AG04450 (cell line): ENCODE measurements at regions of chr14 and their contacts with region 1.

Region 1: DNA sequence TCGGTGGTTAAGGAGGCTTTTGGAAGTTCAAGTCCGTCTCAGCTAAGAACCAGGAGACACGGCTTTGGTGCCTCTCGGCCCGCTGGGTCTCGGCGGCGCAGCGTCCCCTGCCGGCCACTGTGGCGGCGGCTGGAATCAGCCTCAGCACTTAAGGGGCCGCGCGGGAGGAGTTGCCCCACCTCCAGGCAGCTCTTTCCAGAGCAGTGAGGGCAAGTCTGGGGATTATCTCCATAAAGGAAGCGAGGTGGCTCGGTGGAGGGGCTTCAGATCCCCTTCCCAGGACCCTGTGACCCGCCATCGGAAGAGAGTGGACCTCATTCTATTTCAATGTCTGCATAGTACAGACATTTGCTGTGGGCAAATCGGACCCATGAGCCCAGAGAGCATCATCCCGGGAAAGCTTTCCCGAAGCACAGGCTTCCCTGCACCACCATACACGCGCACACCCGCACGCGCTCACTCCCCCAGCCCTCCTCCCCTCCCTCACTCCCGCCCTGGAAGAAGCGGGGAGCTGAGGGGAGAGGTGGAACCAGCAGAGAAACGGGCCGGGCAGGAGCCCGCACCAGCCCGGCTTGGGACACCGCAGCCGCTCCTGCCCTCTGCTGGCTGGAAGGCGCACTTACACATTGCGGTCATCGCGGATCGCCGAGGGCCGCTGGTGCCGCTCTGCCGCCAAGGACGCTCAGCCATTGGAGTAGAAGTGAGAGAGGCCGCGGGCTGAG is 15.9 kb downstream of the RNASE2 start:
- DNase-seq: peak; percentile 69
- H3K4me3 ChIP-seq: peak overlapping the region; percentile 69
- H3K27ac ChIP-seq: peak overlapping the region; percentile 47
- H3K27me3 ChIP-seq: peaks cover 12% of the 10 kb centered on the region
- CTCF ChIP-seq: peak; percentile 98

Region 2: DNA sequence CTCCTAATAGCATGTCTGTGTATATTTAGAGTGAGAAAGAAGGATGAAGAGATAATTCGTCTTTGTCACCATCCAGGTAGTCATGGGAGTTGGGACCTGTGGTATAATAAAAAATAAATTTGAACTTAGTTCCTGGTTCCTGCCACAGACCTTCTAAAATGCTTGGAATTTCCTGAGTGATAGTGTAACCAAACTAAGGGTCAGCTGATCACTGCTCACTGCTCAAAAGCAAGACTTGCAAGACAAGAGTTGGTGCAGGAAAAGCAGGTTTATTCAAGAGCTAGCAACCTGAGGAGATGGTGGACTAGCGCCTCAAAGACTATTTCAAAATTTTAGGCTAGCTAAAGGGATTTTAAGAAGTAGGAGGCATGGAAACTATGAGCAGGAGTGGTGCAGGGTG is 263.5 kb before region 1 on chr14:
- CTCF ChIA-PET with region 1: interaction called, 10 read pairs
- POLR2A ChIA-PET with region 1: no interaction called
- DNase-seq: no peak
- H3K4me3 ChIP-seq: no peak overlapping the region
- H3K27ac ChIP-seq: no peak overlapping the region
- H3K27me3 ChIP-seq: no peaks in the 10 kb centered on the region
- CTCF ChIP-seq: no peak

Region 3: DNA sequence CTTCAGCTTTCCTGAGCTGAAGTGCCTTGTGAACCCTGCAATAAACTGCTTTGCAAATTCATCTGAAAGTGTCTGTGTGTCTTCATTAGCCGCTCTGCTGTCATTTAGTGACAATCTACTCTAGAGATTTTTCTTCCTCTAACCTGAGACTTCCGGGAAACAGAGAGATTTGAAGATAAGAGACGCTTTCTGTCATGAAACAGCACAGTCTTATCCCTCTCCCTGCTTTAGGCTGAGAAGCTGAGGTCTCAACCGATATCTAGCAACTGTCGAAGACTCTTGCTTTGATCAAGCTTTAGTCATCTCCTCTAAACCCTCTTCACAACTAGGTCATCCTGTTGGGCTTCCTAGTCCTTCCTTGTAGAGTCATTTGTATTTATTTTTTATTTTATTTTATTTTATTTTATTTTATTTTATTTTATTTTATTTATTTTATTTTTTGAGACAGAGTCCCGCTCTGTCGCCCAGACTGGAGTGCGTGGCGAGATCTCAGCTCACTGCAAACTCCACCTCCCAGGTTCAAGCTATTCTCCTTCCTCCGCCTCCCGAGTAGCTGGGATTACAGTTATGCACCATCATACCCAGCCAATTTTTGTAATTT is 14.7 kb before region 1 on chr14:
- CTCF ChIA-PET with region 1: interaction called, 106 read pairs
- POLR2A ChIA-PET with region 1: no interaction called
- DNase-seq: no peak
- H3K4me3 ChIP-seq: no peak overlapping the region
- H3K27ac ChIP-seq: no peak overlapping the region
- H3K27me3 ChIP-seq: peaks cover 2% of the 10 kb centered on the region
- CTCF ChIP-seq: no peak

Region 4: DNA sequence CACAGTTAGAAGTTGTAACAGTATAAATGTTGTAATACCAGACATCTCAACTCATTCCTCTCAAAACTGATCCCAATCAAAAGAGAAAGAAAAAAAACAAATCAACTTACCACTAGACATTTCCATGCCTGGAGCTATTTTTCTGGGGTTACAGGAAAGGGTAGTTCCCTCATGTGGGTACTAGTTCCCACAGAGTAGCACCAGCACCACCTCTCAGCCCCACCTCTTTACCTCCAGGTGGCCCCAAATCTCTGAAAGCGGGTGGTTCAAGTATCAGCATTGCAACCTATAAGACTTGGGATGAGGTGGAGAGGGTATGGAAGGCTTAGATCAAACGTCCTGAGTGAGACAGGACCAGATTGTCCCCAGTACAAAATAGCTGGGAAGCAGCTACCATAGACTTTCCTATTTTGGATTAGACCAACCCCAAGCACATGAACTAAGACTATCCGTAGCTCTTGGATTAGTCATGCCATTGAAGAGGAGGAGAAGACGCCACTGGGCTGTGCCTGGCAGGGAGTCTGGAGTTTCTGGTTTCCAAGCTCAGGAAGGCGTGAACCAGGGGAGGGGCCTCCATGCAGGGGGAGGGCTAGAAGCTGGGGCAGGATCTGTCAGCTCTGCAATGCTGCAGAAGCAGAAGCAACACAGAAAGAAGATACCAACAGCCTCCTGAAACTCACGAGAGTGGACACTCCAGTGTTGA is 27.7 kb after region 1 on chr14 and contains the start of gene SLC39A2:
- CTCF ChIA-PET with region 1: interaction called, 55 read pairs
- POLR2A ChIA-PET with region 1: interaction called, 3 read pairs
- DNase-seq: no peak
- H3K4me3 ChIP-seq: no peak within 1 kb of the TSS
- H3K27ac ChIP-seq: no peak within 1 kb of the TSS
- H3K27me3 ChIP-seq: no peaks in the 10 kb centered on the region
- CTCF ChIP-seq: no peak
- polyA plus RNA-seq, gene SLC39A2: 0.06 TPM in 1 of 2 replicates, not detected in the other

Region 5: GRCh38 chr14:21097636-21098075 is 126.5 kb after region 1 on chr14:
- CTCF ChIA-PET with region 1: interaction called, 28 read pairs
- POLR2A ChIA-PET with region 1: no interaction called
- DNase-seq: no peak
- H3K4me3 ChIP-seq: peak overlapping the region; percentile 43
- H3K27ac ChIP-seq: no peak overlapping the region
- H3K27me3 ChIP-seq: peaks cover 9% of the 10 kb centered on the region
- CTCF ChIP-seq: no peak